ENCODE measurements at regions of chr3 and their contacts with region 1.

Region 1: GRCh38 chr3:48459773-48460516 is 13.4 kb downstream of the ATRIP start:
- DNase-seq: peak in 1 of 10 donors; percentile 75
- H3K4me3 ChIP-seq: no peak overlapping the region
- H3K27ac ChIP-seq: peak overlapping the region in 2 of 59 donors; percentile 34 to 63
- H3K27me3 ChIP-seq: no peaks in the 10 kb centered on the region
- CTCF ChIP-seq: no peak

Region 2: DNA sequence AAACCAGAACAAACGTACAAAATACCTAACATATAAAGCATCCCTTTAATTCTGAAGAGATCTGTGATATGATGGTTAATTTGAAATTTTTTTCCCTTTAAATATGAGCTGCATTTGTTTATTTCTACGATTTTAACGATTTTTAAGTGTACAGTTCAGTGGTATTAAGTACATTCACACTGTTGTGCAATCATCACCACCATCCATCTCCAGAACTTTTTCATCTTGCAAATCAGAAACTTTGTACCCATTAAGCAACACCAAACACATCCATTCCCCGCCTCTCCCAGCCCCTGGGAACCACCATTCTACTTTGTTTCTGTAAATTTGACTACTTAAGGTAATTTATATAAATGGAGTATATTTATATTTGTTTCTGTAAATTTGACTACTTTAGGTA is 495.2 kb before region 1 on chr3:
- intact Hi-C with region 1: no loop called
- DNase-seq: no peak
- H3K4me3 ChIP-seq: no peak overlapping the region
- H3K27ac ChIP-seq: no peak overlapping the region
- H3K27me3 ChIP-seq: no peaks in the 10 kb centered on the region
- CTCF ChIP-seq: no peak

Region 3: GRCh38 chr3:48507351-48508061 is 47.6 kb after region 1 on chr3:
- intact Hi-C with region 1: no loop called
- DNase-seq: peak in 5 of 10 donors; percentile 13 to 43 (median 26)
- H3K4me3 ChIP-seq: no peak overlapping the region
- H3K27ac ChIP-seq: peak overlapping the region in 19 of 59 donors; percentile 3 to 53 (median 31)
- H3K27me3 ChIP-seq: no peaks in the 10 kb centered on the region
- CTCF ChIP-seq: peak in 45 of 56 donors; percentile 12 to 66 (median 38)

Region 4: DNA sequence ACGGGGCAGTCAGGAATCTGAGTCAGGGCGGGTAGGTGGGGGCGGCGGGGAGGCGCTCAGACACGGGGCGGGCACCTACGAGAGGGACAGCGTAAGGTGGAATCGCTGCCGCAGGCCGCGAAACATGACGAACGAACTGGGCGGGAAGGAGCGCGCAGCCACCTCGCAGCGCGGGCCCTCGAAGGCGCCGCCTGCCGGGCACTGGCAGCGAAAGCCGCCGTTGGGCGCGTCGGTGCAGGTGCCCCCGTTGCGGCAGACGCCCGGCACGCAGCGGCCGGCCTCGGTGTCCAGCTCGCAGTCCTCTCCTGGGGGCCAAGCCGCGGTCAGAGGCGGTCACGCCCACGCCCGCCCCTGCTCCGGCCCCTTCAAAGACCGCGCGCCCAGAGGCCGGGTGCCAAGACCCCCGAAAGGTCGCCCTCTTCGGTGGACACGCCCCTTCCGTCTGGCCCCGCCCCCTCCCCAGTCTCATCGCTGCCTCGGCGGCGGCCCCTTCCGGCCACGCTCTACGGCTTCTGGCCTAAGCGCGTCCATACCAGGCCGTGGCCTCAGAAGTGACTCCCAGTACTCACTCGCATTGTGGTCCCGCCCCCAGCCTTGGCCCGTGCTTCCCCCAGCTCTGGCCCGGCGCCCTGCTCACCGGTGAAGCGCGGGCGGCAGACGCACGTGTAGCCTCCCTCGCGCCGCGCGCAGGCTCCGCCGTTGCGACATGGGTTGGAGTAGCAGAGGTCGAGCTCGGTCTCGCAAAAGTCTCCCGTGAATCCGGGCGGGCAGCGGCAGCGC is 196.3 kb after region 1 on chr3:
- intact Hi-C with region 1: loop called in 1 of 2 experiments (anchors 10 kb)
- DNase-seq: peak in 6 of 10 donors; percentile 36 to 75 (median 58)
- H3K4me3 ChIP-seq: peak overlapping the region; percentile 32 to 70 (median 55)
- H3K27ac ChIP-seq: peak overlapping the region in 20 of 59 donors; percentile 6 to 61 (median 34)
- H3K27me3 ChIP-seq: no peaks in the 10 kb centered on the region
- CTCF ChIP-seq: peak; percentile 14 to 73 (median 56)

Measured in dorsolateral prefrontal cortex (tissue), 120 donors.